H1 (cell line): ENCODE measurements at regions of chr6 and their contacts with region 1.

Region 1: GRCh38 chr6:32785781-32786533 is 22.6 kb upstream of the HLA-DQB2 start:
- DNase-seq: peak in 1 of 2 experiments; percentile 49
- H3K4me3 ChIP-seq: no peak overlapping the region
- H3K27ac ChIP-seq: no peak overlapping the region
- H3K4me1 ChIP-seq: no peaks in the 10 kb centered on the region; a peak in 1 of 7 replicates
- H3K27me3 ChIP-seq: no peaks in the 10 kb centered on the region
- CTCF ChIP-seq: peak; percentile 15 to 75 (median 66)
- EP300 ChIP-seq: no peak
- POLR2A ChIP-seq: no peak
- RAD21 ChIP-seq: peak; percentile 86 to 88

Region 2: DNA sequence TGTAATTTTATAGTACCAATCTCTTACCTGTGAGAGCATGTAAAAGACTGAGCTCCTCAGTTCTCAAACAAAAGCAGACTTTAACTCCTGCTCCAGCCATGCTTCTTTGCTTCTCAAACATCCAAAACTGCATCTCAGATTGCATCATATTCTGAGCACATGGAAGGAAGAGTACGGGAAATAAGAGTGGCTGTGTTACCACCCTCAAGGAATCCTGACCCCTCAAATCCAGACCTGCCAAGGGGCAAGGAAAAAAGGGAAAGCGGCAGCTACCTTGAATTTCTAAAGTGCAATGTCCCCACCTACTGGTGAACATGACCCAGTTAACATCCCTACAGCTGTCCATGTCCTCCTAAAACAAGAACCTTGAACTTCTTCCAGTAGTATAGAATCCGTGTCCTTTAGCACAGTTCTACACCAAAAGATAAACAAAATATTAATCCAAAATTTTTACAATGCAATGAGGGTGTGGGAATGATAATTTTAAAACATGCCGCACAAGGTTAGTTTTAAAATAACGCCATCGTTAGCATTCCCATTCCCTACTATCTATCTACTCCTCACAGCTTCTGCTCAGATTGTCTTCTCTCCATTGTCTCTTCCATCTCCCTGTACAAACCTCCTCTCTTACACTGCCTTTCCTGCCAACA is 85.4 kb before region 1 on chr6:
- CTCF ChIA-PET with region 1: interaction called, 37 read pairs
- POLR2A ChIA-PET with region 1: interaction called, 3 read pairs
- DNase-seq: peak; percentile 34 to 53
- H3K4me3 ChIP-seq: no peak overlapping the region
- H3K27ac ChIP-seq: no peak overlapping the region
- H3K4me1 ChIP-seq: no peaks in the 10 kb centered on the region
- H3K27me3 ChIP-seq: no peaks in the 10 kb centered on the region
- CTCF ChIP-seq: peak; percentile 13 to 74 (median 69)
- EP300 ChIP-seq: no peak
- POLR2A ChIP-seq: no peak
- RAD21 ChIP-seq: peak; percentile 88 to 89

Region 3: GRCh38 chr6:32796848-32797776 is 11.2 kb after region 1 on chr6:
- CTCF ChIA-PET with region 1: interaction called, 10 read pairs
- POLR2A ChIA-PET with region 1: interaction called, 3 read pairs
- DNase-seq: peak; percentile 19 to 97
- H3K4me3 ChIP-seq: peak overlapping the region in 3 of 4 experiments; percentile 7 to 48 (median 24); a peak in 4 of 8 replicates
- H3K27ac ChIP-seq: no peak overlapping the region
- H3K4me1 ChIP-seq: peaks cover 0 to 3% (median 0%) of the 10 kb centered on the region in 4 experiments; a peak in 2 of 7 replicates
- H3K27me3 ChIP-seq: peaks cover 0 to 1% (median 0%) of the 10 kb centered on the region in 4 experiments; a peak in 1 of 7 replicates
- CTCF ChIP-seq: peak; percentile 69 to 83 (median 75)
- EP300 ChIP-seq: no peak
- POLR2A ChIP-seq: no peak
- RAD21 ChIP-seq: peak; percentile 82 to 89

Region 4: GRCh38 chr6:32933636-32934085 is 147.7 kb after region 1 on chr6:
- CTCF ChIA-PET with region 1: no interaction called
- POLR2A ChIA-PET with region 1: no interaction called
- DNase-seq: peak in 1 of 2 experiments; percentile 89
- H3K4me3 ChIP-seq: no peak overlapping the region
- H3K27ac ChIP-seq: no peak overlapping the region
- H3K4me1 ChIP-seq: no peaks in the 10 kb centered on the region
- H3K27me3 ChIP-seq: no peaks in the 10 kb centered on the region
- CTCF ChIP-seq: peak; percentile 75 to 84 (median 82)
- EP300 ChIP-seq: no peak
- POLR2A ChIP-seq: no peak
- RAD21 ChIP-seq: peak; percentile 59 to 73